ENCODE measurements at regions of chr1 and their contacts with region 1.

Region 1: DNA sequence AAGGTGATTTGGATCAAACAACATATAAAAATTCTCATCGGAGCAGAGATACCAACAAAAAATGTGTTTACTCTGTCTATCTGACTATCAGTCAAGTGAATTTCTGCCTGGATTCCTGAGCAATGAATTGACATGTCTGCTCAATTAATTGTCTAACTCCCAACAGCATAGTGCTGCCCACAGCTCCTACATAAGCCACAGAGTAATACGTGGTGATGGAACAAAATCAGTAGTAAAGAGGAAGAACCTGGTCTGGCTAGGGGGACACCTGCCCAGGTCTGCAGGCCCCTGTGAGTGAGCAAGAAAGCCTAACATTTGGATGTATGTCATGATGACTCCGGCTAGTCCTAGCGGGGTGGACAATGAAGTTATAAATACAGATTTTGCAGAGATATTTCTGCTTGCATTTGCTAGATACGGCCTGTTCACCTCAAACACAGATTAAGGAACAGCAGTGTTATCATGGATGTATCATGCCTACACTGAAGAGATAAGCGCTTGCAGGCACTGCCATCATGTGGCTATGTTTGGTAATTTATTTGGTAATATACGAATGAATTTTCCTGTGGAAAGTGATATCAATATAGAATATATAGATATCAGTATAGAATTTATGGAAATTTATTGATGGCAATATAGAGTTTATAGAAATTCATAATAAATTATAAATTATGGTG is 69.6 kb upstream of the LRRC8B start:
- DNase-seq: peak; percentile 61
- H3K4me3 Mint-ChIP-seq: no peak overlapping the region
- H3K27ac Mint-ChIP-seq: no peak overlapping the region
- H3K4me1 Mint-ChIP-seq: peaks cover 5% of the 10 kb centered on the region
- H3K27me3 Mint-ChIP-seq: no peaks in the 10 kb centered on the region
- CTCF ChIP-seq: peak; percentile 44

Region 2: GRCh38 chr1:88935522-88936222 is 519.3 kb before region 1 on chr1:
- CTCF ChIA-PET with region 1: interaction called, 3 read pairs
- POLR2A ChIA-PET with region 1: no interaction called
- intact Hi-C with region 1: loop called (anchors 1 kb)
- DNase-seq: peak; percentile 58
- H3K4me3 Mint-ChIP-seq: no peak overlapping the region
- H3K27ac Mint-ChIP-seq: peak overlapping the region; percentile 49
- H3K4me1 Mint-ChIP-seq: no peaks in the 10 kb centered on the region
- H3K27me3 Mint-ChIP-seq: no peaks in the 10 kb centered on the region
- CTCF ChIP-seq: peak; percentile 52

Region 3: DNA sequence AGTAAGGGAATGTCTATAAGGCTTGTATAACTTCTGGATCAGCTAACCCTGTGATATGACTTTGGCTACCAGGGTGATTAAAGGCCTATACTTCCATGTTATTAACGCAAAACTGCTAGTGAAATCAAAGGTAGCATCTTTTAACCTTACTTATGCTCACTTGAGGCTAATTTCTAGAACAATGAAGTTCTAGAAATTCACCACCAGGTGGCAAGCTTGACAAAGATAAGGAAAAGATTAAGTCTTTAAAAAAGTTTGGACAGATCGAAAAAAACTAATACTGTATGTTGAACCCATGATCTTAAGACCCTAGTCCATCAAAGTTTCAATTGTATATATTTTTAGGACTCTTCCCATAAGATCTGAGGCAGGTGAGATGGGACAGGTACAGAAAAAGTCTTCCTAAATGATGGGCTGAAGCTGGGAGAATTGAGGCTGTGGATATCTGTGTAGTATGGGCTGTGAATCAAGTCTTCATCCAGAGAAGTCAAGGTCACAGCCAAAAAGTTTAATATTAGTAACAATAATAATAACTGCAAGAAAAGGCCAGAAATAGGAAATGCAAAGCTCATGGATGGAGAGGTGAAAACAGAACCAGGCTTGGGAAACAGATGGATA is 481.4 kb before region 1 on chr1:
- CTCF ChIA-PET with region 1: interaction called, 13 read pairs
- POLR2A ChIA-PET with region 1: no interaction called
- intact Hi-C with region 1: no loop called
- DNase-seq: peak; percentile 53
- H3K4me3 Mint-ChIP-seq: no peak overlapping the region
- H3K27ac Mint-ChIP-seq: no peak overlapping the region
- H3K4me1 Mint-ChIP-seq: peaks cover 10% of the 10 kb centered on the region
- H3K27me3 Mint-ChIP-seq: no peaks in the 10 kb centered on the region
- CTCF ChIP-seq: peak; percentile 57

Region 4: DNA sequence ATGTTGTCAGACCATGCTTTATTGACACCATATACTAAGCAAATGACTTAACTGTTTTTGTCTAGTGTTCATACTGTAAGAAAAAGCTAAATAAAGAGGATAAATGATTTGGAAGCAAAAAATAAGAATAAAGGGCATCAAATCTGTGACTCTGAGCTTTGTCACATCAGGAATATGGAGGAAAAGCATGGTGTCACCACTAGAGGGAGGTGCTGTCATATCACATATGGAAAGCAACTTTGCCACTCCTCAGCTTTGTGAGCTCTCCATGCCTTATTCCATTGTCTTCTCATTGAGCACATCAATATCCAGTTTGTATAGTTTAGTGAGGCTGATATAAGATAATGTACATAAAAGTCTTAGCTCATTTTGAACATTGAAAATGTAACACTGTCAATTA is 369.2 kb before region 1 on chr1:
- CTCF ChIA-PET with region 1: interaction called, 27 read pairs
- POLR2A ChIA-PET with region 1: no interaction called
- intact Hi-C with region 1: loop called (anchors 1 kb)
- DNase-seq: peak; percentile 73
- H3K4me3 Mint-ChIP-seq: no peak overlapping the region
- H3K27ac Mint-ChIP-seq: no peak overlapping the region
- H3K4me1 Mint-ChIP-seq: no peaks in the 10 kb centered on the region
- H3K27me3 Mint-ChIP-seq: no peaks in the 10 kb centered on the region
- CTCF ChIP-seq: peak; percentile 65

Region 5: GRCh38 chr1:89358287-89358893 is 96.6 kb before region 1 on chr1:
- CTCF ChIA-PET with region 1: interaction called, 10 read pairs
- POLR2A ChIA-PET with region 1: no interaction called
- intact Hi-C with region 1: loop called (anchors 2 kb)
- DNase-seq: peak; percentile 81
- H3K4me3 Mint-ChIP-seq: no peak overlapping the region
- H3K27ac Mint-ChIP-seq: no peak overlapping the region
- H3K4me1 Mint-ChIP-seq: peaks cover 10% of the 10 kb centered on the region
- H3K27me3 Mint-ChIP-seq: no peaks in the 10 kb centered on the region
- CTCF ChIP-seq: peak; percentile 60

Region 6: GRCh38 chr1:89465201-89465600 is 10.2 kb after region 1 on chr1:
- CTCF ChIA-PET with region 1: interaction called, 13 read pairs
- POLR2A ChIA-PET with region 1: no interaction called
- intact Hi-C with region 1: no loop called
- DNase-seq: peak; percentile 45
- H3K4me3 Mint-ChIP-seq: no peak overlapping the region
- H3K27ac Mint-ChIP-seq: no peak overlapping the region
- H3K4me1 Mint-ChIP-seq: peaks cover 5% of the 10 kb centered on the region
- H3K27me3 Mint-ChIP-seq: peaks cover 15% of the 10 kb centered on the region
- CTCF ChIP-seq: no peak

Measured in MCF 10A (cell line).